H1 (cell line): ENCODE measurements at regions of chr13 and their contacts with region 1.

Region 1: GRCh38 chr13:26482451-26483197 is 74.9 kb upstream of the WASF3 start:
- DNase-seq: peak; percentile 47 to 83
- H3K4me3 ChIP-seq: no peak overlapping the region
- H3K27ac ChIP-seq: no peak overlapping the region
- H3K4me1 ChIP-seq: peaks cover 0 to 3% (median under 1%) of the 10 kb centered on the region in 4 experiments; a peak in 3 of 7 replicates
- H3K27me3 ChIP-seq: no peaks in the 10 kb centered on the region
- CTCF ChIP-seq: peak; percentile 6 to 84 (median 76)
- EP300 ChIP-seq: no peak
- POLR2A ChIP-seq: no peak
- RAD21 ChIP-seq: peak; percentile 68 to 80

Region 2: DNA sequence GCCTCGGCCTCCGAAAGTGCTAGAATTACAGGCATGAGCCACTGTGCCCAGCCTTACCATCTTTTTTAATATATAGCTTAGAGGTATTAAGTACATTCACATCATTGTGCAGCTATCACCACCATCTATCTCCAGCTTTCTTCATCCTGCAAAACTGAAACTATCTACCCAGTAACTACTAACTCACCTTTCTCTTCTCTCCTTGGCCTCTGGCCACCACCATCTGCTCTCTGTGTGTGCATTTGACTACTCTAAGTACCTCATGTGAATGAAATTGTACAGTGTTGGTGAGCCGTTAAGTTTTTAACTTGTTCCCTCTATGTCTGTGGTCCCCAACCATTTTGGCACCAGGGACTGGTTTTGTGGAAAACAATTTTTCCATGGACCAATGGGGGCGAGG is 172.6 kb before region 1 on chr13:
- CTCF ChIA-PET with region 1: no interaction called
- POLR2A ChIA-PET with region 1: no interaction called
- DNase-seq: no peak
- H3K4me3 ChIP-seq: no peak overlapping the region
- H3K27ac ChIP-seq: no peak overlapping the region
- H3K4me1 ChIP-seq: no peaks in the 10 kb centered on the region
- H3K27me3 ChIP-seq: no peaks in the 10 kb centered on the region
- CTCF ChIP-seq: no peak
- EP300 ChIP-seq: no peak
- POLR2A ChIP-seq: no peak
- RAD21 ChIP-seq: no peak

Region 3: GRCh38 chr13:26401578-26402021 is 81.0 kb before region 1 on chr13:
- CTCF ChIA-PET with region 1: no interaction called
- POLR2A ChIA-PET with region 1: no interaction called
- DNase-seq: no peak
- H3K4me3 ChIP-seq: no peak overlapping the region
- H3K27ac ChIP-seq: no peak overlapping the region
- H3K4me1 ChIP-seq: no peaks in the 10 kb centered on the region
- H3K27me3 ChIP-seq: no peaks in the 10 kb centered on the region
- CTCF ChIP-seq: no peak
- EP300 ChIP-seq: no peak
- POLR2A ChIP-seq: no peak
- RAD21 ChIP-seq: no peak

Region 4: DNA sequence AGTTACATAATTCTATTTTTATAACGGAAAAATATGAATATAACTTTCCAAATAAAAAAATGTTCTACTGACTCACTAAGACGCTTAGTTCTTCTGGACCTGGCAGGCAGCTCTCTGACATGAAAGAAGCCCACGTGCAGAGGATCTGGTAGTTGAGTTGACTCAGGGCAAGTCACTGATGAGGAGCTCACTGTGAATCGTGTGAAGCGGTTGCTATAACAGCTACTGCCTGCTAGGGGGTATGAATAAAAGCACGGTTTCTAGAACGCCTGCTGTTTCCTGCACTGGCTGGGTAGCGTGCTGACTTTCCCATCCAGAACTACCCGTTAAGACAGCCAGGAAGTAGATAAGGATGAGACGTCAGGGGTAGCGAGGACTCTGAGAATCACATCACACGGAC is 20.2 kb after region 1 on chr13:
- CTCF ChIA-PET with region 1: interaction called, 168 read pairs
- POLR2A ChIA-PET with region 1: no interaction called
- DNase-seq: no peak
- H3K4me3 ChIP-seq: no peak overlapping the region
- H3K27ac ChIP-seq: no peak overlapping the region
- H3K4me1 ChIP-seq: peaks cover 0 to 5% (median 2%) of the 10 kb centered on the region in 4 experiments; a peak in 2 of 7 replicates
- H3K27me3 ChIP-seq: no peaks in the 10 kb centered on the region; a peak in 1 of 7 replicates
- CTCF ChIP-seq: peak in 2 of 3 experiments; percentile 12 to 22; a peak in 2 of 4 replicates
- EP300 ChIP-seq: no peak
- POLR2A ChIP-seq: no peak
- RAD21 ChIP-seq: peak; percentile 10 to 17; a peak in 2 of 4 replicates